GM12878 (cell line): ENCODE measurements at regions of chrX and their contacts with region 1.

Region 1: GRCh38 chrX:37926700-37927099 is 79.3 kb upstream of the DYNLT3 start:
- DNase-seq: peak; percentile 4
- ATAC-seq: peak; percentile 84
- H3K4me3 ChIP-seq: no peak overlapping the region
- H3K27ac ChIP-seq: no peak overlapping the region
- H3K4me1 ChIP-seq: no peaks in the 10 kb centered on the region
- H3K27me3 ChIP-seq: no peaks in the 10 kb centered on the region
- CTCF ChIP-seq: peak in 2 of 3 experiments; percentile 46 to 50; a peak in 3 of 6 replicates
- EP300 ChIP-seq: no peak
- POLR2A ChIP-seq: no peak
- RAD21 ChIP-seq: peak; percentile 60

Region 2: GRCh38 chrX:37883196-37883595 is 43.5 kb before region 1 on chrX:
- CTCF ChIA-PET with region 1: no interaction called
- POLR2A ChIA-PET with region 1: no interaction called
- RAD21 ChIA-PET with region 1: no interaction called
- SMC1A ChIA-PET with region 1: no interaction called
- in situ Hi-C with region 1: no loop called
- intact Hi-C with region 1: no loop called
- DNase-seq: no peak
- ATAC-seq: no peak
- H3K4me3 ChIP-seq: no peak overlapping the region
- H3K27ac ChIP-seq: no peak overlapping the region
- H3K4me1 ChIP-seq: no peaks in the 10 kb centered on the region
- H3K27me3 ChIP-seq: no peaks in the 10 kb centered on the region; a peak in 1 of 4 replicates
- CTCF ChIP-seq: no peak
- EP300 ChIP-seq: no peak
- POLR2A ChIP-seq: no peak
- RAD21 ChIP-seq: no peak

Region 3: DNA sequence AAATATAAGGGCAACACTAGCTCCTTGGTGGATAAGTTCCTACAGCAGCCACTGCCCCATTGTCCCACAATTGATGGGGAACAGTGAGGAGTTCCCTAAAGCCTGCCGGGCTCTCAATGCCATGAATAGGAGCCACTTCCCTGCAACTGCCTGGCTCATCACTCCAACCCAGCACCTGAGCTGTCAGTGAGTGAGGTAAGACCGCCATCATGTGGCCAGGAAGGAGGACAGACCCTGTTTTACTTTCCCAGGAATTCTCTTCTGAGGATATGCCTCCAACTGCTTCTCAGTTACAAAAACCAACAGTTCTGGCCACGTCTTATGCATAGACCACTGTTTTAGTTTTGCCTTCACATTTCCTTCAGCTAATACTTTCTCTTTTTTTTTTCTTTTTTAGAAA is 248.4 kb after region 1 on chrX:
- CTCF ChIA-PET with region 1: interaction called, 67 read pairs
- POLR2A ChIA-PET with region 1: no interaction called
- RAD21 ChIA-PET with region 1: interaction called, 7 read pairs
- SMC1A ChIA-PET with region 1: interaction called, 6 read pairs
- in situ Hi-C with region 1: loop called (anchors 5 kb)
- intact Hi-C with region 1: loop called (anchors 2 kb)
- DNase-seq: peak; percentile 3
- ATAC-seq: peak; percentile 81
- H3K4me3 ChIP-seq: no peak overlapping the region
- H3K27ac ChIP-seq: no peak overlapping the region
- H3K4me1 ChIP-seq: no peaks in the 10 kb centered on the region
- H3K27me3 ChIP-seq: no peaks in the 10 kb centered on the region; a peak in 1 of 4 replicates
- CTCF ChIP-seq: peak; percentile 47 to 61 (median 55)
- EP300 ChIP-seq: no peak
- POLR2A ChIP-seq: no peak
- RAD21 ChIP-seq: peak; percentile 69